G401 (cell line): ENCODE measurements at regions of chr1 and their contacts with region 1.

Region 1: GRCh38 chr1:6727535-6727934 is 25.9 kb upstream of the DNAJC11 start:
- DNase-seq: peak; percentile 53

Region 2: DNA sequence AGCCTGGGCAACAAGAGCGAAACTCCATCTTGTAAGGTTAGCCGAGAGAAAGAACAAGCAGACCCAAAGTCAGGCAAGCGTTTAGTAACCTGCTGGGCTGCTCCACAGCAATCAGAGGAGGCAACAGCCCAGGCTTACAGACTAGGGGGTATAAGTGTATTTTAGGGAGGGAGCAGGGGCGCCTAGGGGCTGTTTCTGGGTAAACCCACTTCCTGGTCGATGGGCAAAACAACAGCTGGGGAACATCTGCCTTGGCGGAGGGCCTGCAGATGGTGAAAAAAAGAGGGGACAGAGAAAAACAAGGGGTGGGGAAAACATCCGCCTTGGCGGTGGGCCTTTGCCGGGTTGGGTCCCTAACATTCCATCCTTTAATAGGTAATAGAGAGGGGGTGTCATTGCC is 167.3 kb before region 1 on chr1:
- in situ Hi-C with region 1: no loop called
- DNase-seq: no peak

Region 3: GRCh38 chr1:6784560-6785317 is 57.2 kb after region 1 on chr1:
- in situ Hi-C with region 1: loop called (anchors 10 kb)
- DNase-seq: peak; percentile 100